GM23248 (cell line): ENCODE measurements at regions of chr7 and their contacts with region 1.

Region 1: GRCh38 chr7:101287032-101287431 is 34.6 kb downstream of the IFT22 start:
- DNase-seq: no peak
- H3K4me3 ChIP-seq: no peak overlapping the region
- H3K27ac ChIP-seq: no peak overlapping the region
- H3K4me1 ChIP-seq: no peaks in the 10 kb centered on the region
- H3K27me3 ChIP-seq: peaks cover 26% of the 10 kb centered on the region

Region 2: DNA sequence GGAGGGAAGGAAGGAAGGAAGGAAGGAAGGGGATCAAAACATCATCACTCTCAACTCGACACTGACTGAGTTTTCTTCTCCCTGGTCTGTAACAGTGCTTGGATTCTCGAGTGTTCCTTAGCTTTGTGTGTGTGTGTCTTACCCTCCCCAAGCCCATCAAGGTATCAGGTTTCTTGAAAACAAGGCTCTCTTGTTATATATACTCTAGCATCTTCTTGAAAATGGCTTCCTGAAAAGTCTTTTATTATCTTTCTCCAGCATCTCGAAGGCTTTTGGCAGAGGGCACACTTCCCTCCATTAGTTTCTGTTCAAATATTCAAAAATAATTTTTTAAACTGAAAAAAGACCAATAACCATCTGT is 146.7 kb before region 1 on chr7:
- in situ Hi-C with region 1: loop called (anchors 10 kb)
- DNase-seq: peak; percentile 56
- H3K4me3 ChIP-seq: no peak overlapping the region
- H3K27ac ChIP-seq: peak overlapping the region; percentile 98
- H3K4me1 ChIP-seq: peaks cover 41% of the 10 kb centered on the region
- H3K27me3 ChIP-seq: no peaks in the 10 kb centered on the region